Activated T-helper 1 cell treated with anti-CD3 and anti-CD28 coated beads, Interleukin-12 subunit alpha, Interleukin-12 subunit beta, Interleukin-2, Interleukin-4 antibody, amounts not matched to agents 30 ng/mL and 10 ng/mL and 1 ng/mL, durations not matched to agents 14 hours and 24 hours and 36 hours (primary cell): ENCODE measurements at regions of chr12 and their contacts with region 1.

Region 1: GRCh38 chr12:6039894-6040568 is 84.4 kb downstream of the VWF start:
- DNase-seq: peak; percentile 26
- H3K4me3 Mint-ChIP-seq: no peak overlapping the region
- H3K27ac Mint-ChIP-seq: no peak overlapping the region
- H3K4me1 Mint-ChIP-seq: peaks cover 7% of the 10 kb centered on the region
- H3K27me3 Mint-ChIP-seq: peaks cover 2% of the 10 kb centered on the region

Region 2: DNA sequence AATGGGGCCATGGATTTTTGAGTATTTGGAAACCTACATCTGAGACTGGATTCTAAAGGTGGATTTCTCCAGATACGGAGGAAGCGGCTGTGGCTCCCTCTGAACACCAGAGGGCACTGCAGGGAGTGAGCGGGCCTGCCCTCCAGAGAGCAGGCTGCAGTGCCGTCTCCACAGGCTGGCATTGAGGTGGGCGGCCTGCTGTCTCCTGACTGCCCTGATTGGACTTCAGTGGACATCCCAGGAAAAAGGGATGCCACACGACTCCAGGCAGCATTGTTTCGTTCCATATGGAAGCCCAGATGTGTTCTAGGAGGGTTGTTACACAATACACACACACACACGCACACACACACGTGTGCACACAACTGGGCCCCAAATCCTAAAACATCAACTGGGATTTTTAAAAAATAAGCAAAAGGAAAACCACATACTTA is 74.1 kb before region 1 on chr12:
- intact Hi-C with region 1: loop called (anchors 1 kb)
- DNase-seq: peak; percentile 11
- H3K4me3 Mint-ChIP-seq: no peak overlapping the region
- H3K27ac Mint-ChIP-seq: no peak overlapping the region
- H3K4me1 Mint-ChIP-seq: no peaks in the 10 kb centered on the region
- H3K27me3 Mint-ChIP-seq: no peaks in the 10 kb centered on the region

Region 3: GRCh38 chr12:5988659-5989116 is 51.3 kb before region 1 on chr12:
- intact Hi-C with region 1: loop called (anchors 1 kb)
- DNase-seq: peak; percentile 55
- H3K4me3 Mint-ChIP-seq: no peak overlapping the region
- H3K27ac Mint-ChIP-seq: no peak overlapping the region
- H3K4me1 Mint-ChIP-seq: peaks cover 4% of the 10 kb centered on the region
- H3K27me3 Mint-ChIP-seq: peaks cover 6% of the 10 kb centered on the region

Region 4: DNA sequence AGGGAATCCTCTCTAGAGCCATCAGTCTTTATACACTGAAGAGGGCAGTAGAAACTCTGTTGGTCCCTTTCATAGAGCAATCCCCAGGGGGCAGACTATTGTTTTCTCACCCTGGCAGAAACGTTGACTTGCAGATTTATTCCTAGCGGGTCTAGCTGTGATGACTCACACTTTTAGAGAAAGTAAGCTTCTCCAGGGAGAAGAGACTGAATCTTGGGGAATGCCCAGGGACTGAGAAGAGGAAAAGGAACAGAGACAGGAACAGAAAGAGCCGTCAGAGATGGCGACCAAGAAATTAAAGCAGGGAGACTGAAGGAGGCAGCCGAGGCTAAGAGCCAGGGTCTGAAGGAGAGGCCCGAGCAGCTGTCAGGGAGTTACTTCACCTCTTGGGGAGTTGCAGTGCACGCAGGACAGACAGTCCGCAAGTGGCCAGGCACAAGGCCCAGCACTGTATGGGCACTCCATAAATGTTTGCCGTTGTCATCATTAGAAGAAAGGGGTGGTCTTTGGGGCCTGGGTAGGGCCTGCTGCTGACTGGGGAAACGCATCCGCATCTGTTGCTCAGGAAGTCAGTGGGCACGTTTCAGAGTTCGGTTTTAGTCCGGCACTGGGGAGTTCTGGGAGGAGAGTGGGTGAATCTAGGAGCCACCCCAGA is 283.4 kb after region 1 on chr12:
- intact Hi-C with region 1: no loop called
- DNase-seq: no peak
- H3K4me3 Mint-ChIP-seq: peak overlapping the region; percentile 71
- H3K27ac Mint-ChIP-seq: peak overlapping the region; percentile 90
- H3K4me1 Mint-ChIP-seq: peaks cover 31% of the 10 kb centered on the region
- H3K27me3 Mint-ChIP-seq: no peaks in the 10 kb centered on the region